ENCODE measurements at regions of chr3 and their contacts with region 1.

Region 1: DNA sequence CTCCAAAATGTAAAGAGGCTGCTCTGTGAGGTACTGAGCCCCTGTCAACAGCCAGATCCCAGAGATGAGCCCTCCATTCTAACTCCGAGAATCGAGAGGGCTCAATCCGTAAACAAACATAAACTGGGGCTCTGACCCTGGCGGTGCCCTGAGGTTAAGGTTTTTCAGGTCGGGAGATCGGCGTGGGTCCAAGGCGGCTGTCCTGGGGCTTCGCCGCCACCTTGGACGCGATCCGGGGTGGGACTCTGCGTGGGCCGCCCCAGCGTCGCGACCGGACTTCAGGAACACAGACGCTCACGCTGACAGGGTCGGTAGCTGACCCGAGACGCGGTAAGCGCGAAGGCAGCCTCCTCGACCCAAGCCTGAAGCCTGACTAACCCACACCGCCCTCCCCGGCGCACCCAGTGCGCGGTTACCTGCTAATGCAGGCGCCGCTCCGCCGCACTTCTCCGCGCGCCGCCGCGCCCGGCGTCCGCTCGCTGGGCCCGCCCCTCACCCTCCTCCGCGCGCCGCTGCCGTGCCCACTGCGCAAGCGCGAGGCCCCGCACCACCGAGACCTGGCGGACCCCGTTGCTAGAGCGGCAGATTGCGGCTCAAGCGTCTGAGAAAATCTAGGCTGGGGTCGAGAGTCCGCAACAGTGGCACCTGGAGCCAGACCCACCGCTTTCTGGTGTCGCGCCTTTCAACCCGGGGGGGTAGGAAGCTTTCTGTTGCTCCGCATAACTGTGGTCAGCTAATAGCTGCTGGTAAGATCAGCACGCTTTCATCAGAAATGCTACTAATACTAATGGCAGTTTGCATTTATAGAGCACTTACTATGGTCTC is at the start of gene TBCCD1:
- DNase-seq: peak; percentile 94
- H3K4me3 ChIP-seq: peak within 1 kb of the TSS; percentile 72 to 85 (median 74)
- H3K27ac ChIP-seq: peak within 1 kb of the TSS; percentile 86 to 89 (median 88)
- H3K4me1 ChIP-seq: peaks cover 0 to 57% (median 40%) of the 10 kb centered on the region in 4 donors
- H3K27me3 ChIP-seq: no peaks in the 10 kb centered on the region
- CTCF ChIP-seq: no peak
- EP300 ChIP-seq: no peak
- POLR2A ChIP-seq: peak; percentile 72 to 74
- total RNA-seq, gene TBCCD1: 9.7 to 14.3 (median 11.4) TPM

Region 2: DNA sequence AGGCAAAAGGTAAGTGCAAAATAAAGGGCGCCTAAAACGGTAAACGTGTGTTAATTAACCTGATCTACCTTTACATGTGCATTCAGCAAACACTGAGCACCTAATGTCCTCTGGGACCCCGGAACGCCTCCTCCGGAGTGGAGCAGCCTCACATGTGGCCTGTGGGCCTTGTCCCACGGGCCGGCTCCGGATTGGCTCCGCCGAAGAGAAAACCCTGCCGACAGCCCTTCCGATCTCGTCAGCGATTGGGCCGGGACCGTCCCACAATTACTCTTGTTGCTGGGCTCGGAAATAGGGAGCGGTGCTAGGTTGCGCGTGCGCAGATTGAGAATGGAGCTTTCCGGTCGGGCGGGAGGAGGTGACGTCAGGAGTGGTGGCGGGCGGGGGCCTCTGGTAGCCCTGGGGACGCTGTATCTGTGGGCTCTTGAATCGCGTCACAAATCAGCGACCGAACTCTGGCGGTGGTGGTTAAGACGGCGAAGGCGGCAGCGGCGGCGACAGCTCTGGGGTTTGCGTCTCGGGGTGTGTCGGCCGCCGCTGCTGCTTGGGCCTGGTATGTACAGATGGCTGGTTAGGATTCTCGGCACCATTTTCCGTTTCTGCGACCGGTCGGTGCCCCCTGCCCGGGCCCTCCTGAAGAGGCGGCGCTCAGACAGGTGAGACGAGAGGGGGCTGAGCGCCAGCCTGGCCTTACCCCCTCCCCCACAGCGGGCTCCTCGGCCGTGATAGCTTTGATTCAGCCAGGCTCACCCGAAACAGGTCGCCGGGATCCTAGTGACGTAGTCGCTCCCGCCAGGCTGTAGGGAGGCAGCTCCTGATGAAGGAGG is 981.0 kb before region 1 on chr3 and contains the start of gene SENP2:
- intact Hi-C with region 1: loop called (anchors 5 kb)
- DNase-seq: peak; percentile 99
- H3K4me3 ChIP-seq: peak within 1 kb of the TSS; percentile 80 to 85 (median 82)
- H3K27ac ChIP-seq: peak within 1 kb of the TSS; percentile 94 to 96 (median 96)
- H3K4me1 ChIP-seq: peaks cover 0 to 36% (median 26%) of the 10 kb centered on the region in 4 donors
- H3K27me3 ChIP-seq: no peaks in the 10 kb centered on the region
- CTCF ChIP-seq: no peak
- EP300 ChIP-seq: no peak
- POLR2A ChIP-seq: peak; percentile 83 to 86
- total RNA-seq, gene SENP2: 24.8 to 28.5 (median 26.7) TPM

Region 3: DNA sequence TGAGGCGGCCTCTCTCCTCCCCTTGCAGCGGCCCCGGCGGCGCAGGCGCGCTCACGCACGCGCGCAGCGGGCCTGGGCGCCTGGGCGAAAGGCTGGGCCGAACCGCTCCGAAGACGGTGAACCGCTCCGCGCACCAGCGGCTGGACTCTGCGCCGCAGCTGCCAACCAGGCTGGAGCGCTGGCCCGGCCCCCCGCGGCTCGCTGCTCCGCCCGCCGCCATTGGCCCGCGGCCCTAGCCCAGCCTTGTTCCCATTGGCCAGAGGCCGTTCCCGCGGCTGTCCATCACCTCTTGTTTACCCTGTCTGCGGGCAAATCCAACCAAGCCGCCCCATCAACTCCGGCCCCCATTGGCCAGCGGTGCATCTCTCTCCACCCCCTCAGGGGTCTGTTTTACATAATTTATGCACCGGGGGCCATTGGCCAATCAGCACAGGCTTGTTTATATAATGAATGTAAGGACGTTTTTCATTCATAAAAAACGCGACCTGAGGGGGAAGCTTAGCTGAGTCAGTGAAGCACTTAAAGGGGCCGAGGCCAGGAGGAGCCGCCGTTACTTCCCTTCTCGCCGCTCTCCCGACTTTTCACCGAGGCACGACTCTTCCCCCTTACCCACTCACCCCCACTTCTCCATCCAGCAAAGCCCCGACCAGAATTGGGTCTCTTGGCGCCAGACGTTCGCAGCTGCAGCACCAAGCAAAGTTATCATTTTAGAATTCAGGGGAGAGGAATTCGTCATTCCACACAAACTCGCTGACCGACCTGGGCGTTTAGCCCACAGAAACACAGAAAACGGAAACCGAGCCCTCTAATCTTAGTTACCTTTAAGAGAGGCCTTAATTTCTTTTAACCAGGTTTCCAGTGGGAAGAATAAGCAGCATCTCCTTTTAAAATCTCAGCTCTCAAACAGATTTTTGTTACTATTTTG is 457.9 kb before region 1 on chr3 and contains the start of gene ETV5:
- intact Hi-C with region 1: loop called (anchors 5 kb)
- DNase-seq: peak; percentile 100
- H3K4me3 ChIP-seq: peak within 1 kb of the TSS; percentile 54 to 70 (median 64)
- H3K27ac ChIP-seq: peak within 1 kb of the TSS; percentile 77 to 87 (median 83)
- H3K4me1 ChIP-seq: peaks cover 0 to 41% (median 34%) of the 10 kb centered on the region in 4 donors
- H3K27me3 ChIP-seq: peaks cover 0 to 47% (median 30%) of the 10 kb centered on the region in 3 donors
- CTCF ChIP-seq: peak in 1 of 4 experiments; percentile 1
- EP300 ChIP-seq: no peak
- POLR2A ChIP-seq: peak; percentile 29 to 31
- total RNA-seq, gene ETV5: 5.8 to 7.8 (median 6.9) TPM

Region 4: GRCh38 chr3:186406669-186407635 is 160.1 kb before region 1 on chr3:
- intact Hi-C with region 1: loop called (anchors 10 kb)
- DNase-seq: peak; percentile 96
- H3K4me3 ChIP-seq: no peak overlapping the region
- H3K27ac ChIP-seq: peak overlapping the region; percentile 88 to 96 (median 90)
- H3K4me1 ChIP-seq: peaks cover 0 to 37% (median 33%) of the 10 kb centered on the region in 4 donors
- H3K27me3 ChIP-seq: no peaks in the 10 kb centered on the region
- CTCF ChIP-seq: no peak
- EP300 ChIP-seq: peak; percentile 78 to 87 (median 83)
- POLR2A ChIP-seq: no peak

Region 5: DNA sequence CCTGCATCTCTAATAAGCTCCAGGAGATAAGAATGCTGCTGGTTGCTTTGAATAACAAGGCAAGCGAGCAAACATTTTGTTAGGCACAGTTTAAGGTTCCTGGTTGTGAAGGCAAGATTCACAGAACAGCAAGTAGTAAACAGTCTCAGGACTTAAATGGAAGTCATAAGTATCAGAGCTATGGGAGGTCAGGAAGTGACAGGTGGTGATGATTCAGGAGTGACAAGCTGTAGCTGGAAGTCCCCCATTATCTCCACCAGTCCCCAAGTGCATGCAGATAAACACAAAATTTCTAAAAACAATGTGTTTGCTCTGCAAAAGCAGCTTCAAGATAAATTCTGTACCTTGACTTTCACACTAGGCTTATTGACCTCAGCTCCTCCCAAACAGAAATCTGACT is 76.4 kb after region 1 on chr3:
- intact Hi-C with region 1: no loop called
- DNase-seq: no peak
- H3K4me3 ChIP-seq: no peak overlapping the region
- H3K27ac ChIP-seq: no peak overlapping the region
- H3K4me1 ChIP-seq: no peaks in the 10 kb centered on the region
- H3K27me3 ChIP-seq: no peaks in the 10 kb centered on the region
- CTCF ChIP-seq: no peak
- EP300 ChIP-seq: no peak
- POLR2A ChIP-seq: no peak

Region 6: DNA sequence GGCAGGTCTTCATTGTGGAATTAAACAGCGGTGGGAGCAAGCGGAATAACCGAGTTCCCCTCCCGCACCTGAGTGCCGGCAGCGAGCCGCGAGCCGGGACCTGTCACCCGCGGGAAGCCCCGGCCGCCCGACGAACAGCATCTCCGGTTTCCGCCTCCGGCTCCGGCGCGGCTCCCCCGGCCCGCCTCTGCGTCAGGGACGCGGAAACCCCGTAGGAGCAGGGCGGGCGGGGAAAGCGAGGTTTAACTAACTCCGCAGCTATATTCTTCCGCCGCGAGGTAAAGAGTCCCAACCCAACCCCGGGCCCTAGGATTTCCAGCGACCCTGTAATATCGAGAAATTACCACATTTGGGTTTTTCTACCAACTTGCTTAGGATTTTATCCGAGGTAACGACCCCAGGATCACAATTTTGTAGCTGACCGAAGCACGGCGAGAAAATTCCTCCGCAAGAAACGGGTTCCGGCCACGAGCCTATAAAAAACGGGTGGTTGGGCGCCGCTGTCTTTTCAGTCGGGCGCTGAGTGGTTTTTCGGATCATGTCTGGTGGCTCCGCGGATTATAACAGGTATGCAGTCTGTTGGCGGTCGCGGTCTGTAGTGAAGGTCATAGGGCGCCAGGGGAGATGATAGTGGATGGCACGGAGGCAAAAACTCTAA is 216.1 kb after region 1 on chr3 and contains the start of gene EIF4A2:
- intact Hi-C with region 1: loop called (anchors 5 kb)
- DNase-seq: peak; percentile 95
- H3K4me3 ChIP-seq: peak within 1 kb of the TSS; percentile 76 to 94 (median 86)
- H3K27ac ChIP-seq: peak within 1 kb of the TSS; percentile 94 to 99 (median 97)
- H3K4me1 ChIP-seq: peaks cover 0 to 47% (median 39%) of the 10 kb centered on the region in 4 donors
- H3K27me3 ChIP-seq: no peaks in the 10 kb centered on the region
- CTCF ChIP-seq: no peak
- EP300 ChIP-seq: peak in 2 of 4 donors; percentile 8 to 27
- POLR2A ChIP-seq: peak; percentile 90 to 98
- total RNA-seq, gene EIF4A2: 632 to 1,010 (median 767) TPM